MCF 10A (cell line): ENCODE measurements at regions of chr5 and their contacts with region 1.

Region 1: GRCh38 chr5:72138943-72139521 is 31.8 kb downstream of the MAP1B start:
- DNase-seq: peak; percentile 51
- H3K4me3 Mint-ChIP-seq: no peak overlapping the region
- H3K27ac Mint-ChIP-seq: no peak overlapping the region
- H3K4me1 Mint-ChIP-seq: peaks cover 33% of the 10 kb centered on the region
- H3K27me3 Mint-ChIP-seq: no peaks in the 10 kb centered on the region
- CTCF ChIP-seq: no peak

Region 2: GRCh38 chr5:72110384-72111013 is 28.5 kb before region 1 on chr5:
- CTCF ChIA-PET with region 1: no interaction called
- POLR2A ChIA-PET with region 1: no interaction called
- intact Hi-C with region 1: no loop called
- DNase-seq: no peak
- H3K4me3 Mint-ChIP-seq: no peak overlapping the region
- H3K27ac Mint-ChIP-seq: no peak overlapping the region
- H3K4me1 Mint-ChIP-seq: peaks cover 5% of the 10 kb centered on the region
- H3K27me3 Mint-ChIP-seq: peaks cover 11% of the 10 kb centered on the region
- CTCF ChIP-seq: no peak

Region 3: GRCh38 chr5:72149742-72150141 is 10.7 kb after region 1 on chr5:
- CTCF ChIA-PET with region 1: no interaction called
- POLR2A ChIA-PET with region 1: no interaction called
- intact Hi-C with region 1: no loop called
- DNase-seq: no peak
- H3K4me3 Mint-ChIP-seq: no peak overlapping the region
- H3K27ac Mint-ChIP-seq: no peak overlapping the region
- H3K4me1 Mint-ChIP-seq: peaks cover 17% of the 10 kb centered on the region
- H3K27me3 Mint-ChIP-seq: no peaks in the 10 kb centered on the region
- CTCF ChIP-seq: peak; percentile 8

Region 4: DNA sequence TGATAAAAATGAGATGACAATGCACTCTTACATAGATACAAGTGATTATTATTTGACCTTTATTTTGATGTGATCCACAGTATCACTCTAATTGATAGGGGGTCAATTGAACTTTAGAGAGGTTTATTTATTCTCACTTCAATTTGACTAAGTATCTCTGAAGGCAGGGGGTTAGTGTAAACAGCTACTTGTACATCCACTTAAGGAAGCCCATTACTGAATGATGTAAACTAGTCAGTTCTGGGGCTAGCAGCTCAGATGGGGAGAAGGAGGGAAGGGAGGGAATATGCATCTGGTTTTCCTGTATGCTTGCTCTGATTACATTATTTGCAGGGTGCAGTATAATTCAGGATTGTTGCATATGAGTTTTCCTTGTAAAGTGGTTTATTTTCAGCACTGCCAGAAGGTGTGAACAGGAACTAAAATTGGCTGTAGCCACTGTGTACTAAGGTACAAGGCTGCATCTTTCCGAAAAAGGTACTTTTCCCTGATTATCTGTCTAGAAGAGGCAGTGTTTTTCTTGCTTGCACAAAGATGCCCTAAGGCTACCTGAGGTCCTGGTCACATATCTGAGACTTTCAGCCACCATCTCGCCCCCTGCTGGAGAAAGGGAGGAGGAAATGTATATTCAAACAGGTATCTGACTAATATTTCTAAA is 129.8 kb after region 1 on chr5:
- CTCF ChIA-PET with region 1: no interaction called
- POLR2A ChIA-PET with region 1: no interaction called
- intact Hi-C with region 1: loop called (anchors 1 kb)
- DNase-seq: peak; percentile 80
- H3K4me3 Mint-ChIP-seq: no peak overlapping the region
- H3K27ac Mint-ChIP-seq: no peak overlapping the region
- H3K4me1 Mint-ChIP-seq: peaks cover 27% of the 10 kb centered on the region
- H3K27me3 Mint-ChIP-seq: no peaks in the 10 kb centered on the region
- CTCF ChIP-seq: peak; percentile 62